Natural killer cell (primary cell): ENCODE measurements at regions of chr1 and their contacts with region 1.

Region 1: GRCh38 chr1:83619170-83619896 is 379.6 kb downstream of the TTLL7 start:
- DNase-seq: no peak
- ATAC-seq: no peak
- H3K4me3 ChIP-seq: no peak overlapping the region
- H3K4me3 Mint-ChIP-seq: no peak overlapping the region
- H3K27ac ChIP-seq: no peak overlapping the region
- H3K27ac Mint-ChIP-seq: no peak overlapping the region
- H3K4me1 ChIP-seq: no peaks in the 10 kb centered on the region
- H3K4me1 Mint-ChIP-seq: no peaks in the 10 kb centered on the region
- H3K27me3 ChIP-seq: no peaks in the 10 kb centered on the region
- H3K27me3 Mint-ChIP-seq: no peaks in the 10 kb centered on the region
- CTCF ChIP-seq: no peak

Region 2: DNA sequence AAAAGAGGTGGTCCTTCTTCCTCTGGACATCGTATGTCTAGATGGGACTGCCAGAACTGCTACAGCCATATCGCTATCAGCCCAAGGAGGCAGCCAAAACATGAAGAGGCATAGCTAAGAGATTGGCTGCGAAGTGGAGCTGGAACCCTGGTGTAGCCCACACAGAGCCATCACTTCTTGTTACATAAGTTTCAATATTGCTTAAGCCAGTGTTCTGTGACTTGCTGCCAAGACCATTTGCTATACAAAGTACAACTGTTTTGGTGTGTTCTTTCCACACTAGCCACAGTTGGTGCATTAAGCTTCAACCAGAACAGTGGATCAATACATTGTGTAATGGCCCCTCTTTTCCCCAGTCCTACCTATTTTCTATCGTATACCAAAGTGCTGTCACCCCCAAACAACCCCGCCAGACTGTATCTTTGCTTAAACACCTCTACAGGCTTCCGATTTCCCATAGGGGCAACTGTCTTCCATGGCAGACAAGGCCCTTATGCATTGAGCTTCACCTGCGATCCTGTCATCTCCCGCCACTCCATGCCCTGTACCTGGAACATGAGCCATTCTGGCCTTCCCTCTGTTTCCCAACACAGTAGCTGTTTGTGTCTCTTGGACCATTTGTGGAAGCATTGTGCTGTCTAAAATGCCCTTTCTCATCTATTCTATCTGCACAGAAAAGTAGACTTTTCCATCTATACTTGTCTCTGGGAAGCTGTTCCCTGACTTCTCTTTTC is 137.8 kb after region 1 on chr1:
- intact Hi-C with region 1: loop called (anchors 10 kb)
- DNase-seq: no peak
- ATAC-seq: no peak
- H3K4me3 ChIP-seq: no peak overlapping the region
- H3K4me3 Mint-ChIP-seq: no peak overlapping the region
- H3K27ac ChIP-seq: no peak overlapping the region
- H3K27ac Mint-ChIP-seq: no peak overlapping the region
- H3K4me1 ChIP-seq: peaks cover 3% of the 10 kb centered on the region
- H3K4me1 Mint-ChIP-seq: no peaks in the 10 kb centered on the region
- H3K27me3 ChIP-seq: no peaks in the 10 kb centered on the region
- H3K27me3 Mint-ChIP-seq: no peaks in the 10 kb centered on the region
- CTCF ChIP-seq: no peak

Region 3: DNA sequence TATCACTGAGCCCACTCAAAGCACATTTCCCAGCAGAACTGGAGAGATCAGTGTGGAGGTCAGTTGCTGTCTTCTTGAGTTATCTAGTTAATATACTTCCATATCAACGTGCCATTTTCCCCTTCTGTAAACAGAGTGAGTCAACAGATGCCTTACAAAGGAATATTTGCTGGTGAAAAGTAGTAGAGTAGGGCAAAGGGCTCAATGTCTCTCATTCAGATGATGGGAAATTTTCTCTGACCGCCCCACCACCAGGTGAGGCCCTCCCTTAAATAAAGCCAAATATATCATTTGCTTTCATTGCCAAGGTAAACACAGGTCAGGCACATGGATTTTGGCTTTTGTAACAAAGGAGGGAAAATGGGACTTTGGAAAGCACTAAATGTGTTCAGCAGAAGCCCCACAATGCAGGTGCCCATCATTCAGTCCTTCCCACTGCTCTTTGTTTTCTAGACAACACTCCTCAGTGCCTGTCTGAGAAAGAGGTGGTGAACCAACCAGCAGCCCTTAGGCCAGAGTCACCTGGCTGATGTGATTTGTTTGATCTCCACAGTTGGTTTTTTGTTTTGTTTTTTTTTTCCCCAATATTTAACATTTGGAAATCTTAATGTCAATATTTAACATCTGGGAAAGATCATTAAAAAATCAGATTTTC is 641.7 kb after region 1 on chr1:
- intact Hi-C with region 1: no loop called
- DNase-seq: no peak
- ATAC-seq: no peak
- H3K4me3 ChIP-seq: no peak overlapping the region
- H3K4me3 Mint-ChIP-seq: no peak overlapping the region
- H3K27ac ChIP-seq: no peak overlapping the region
- H3K27ac Mint-ChIP-seq: no peak overlapping the region
- H3K4me1 ChIP-seq: no peaks in the 10 kb centered on the region
- H3K4me1 Mint-ChIP-seq: no peaks in the 10 kb centered on the region
- H3K27me3 ChIP-seq: no peaks in the 10 kb centered on the region
- H3K27me3 Mint-ChIP-seq: peaks cover 0 to 3% of the 10 kb centered on the region in 2 donors
- CTCF ChIP-seq: no peak